ENCODE measurements at regions of chr1 and their contacts with region 1.

Region 1: GRCh38 chr1:160376525-160377131 is 9.8 kb downstream of the NHLH1 start:
- DNase-seq: peak; percentile 20 to 60
- H3K4me3 ChIP-seq: no peak overlapping the region
- H3K27ac ChIP-seq: no peak overlapping the region
- H3K4me1 ChIP-seq: peaks cover 10% of the 10 kb centered on the region
- H3K27me3 ChIP-seq: no peaks in the 10 kb centered on the region
- CTCF ChIP-seq: peak; percentile 87

Region 2: DNA sequence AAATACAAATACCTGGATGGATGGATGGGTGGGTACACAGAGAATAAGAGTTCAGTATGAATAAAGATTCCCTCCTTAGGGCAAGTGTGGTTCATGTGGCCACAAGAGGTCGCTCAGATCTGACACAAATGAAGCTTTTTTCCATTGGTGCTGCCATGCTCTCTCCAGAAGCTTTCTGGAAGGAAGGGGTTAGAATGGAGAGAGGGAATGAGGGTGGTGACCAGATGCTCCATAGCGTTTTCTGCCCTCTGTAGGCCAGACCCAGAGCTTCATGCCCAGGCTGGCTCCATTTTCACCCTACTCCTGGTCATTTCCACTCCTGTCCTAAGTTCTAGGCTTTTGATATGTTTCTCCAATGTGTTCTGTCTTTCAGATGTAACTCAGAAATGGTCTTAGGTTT is 577.7 kb before region 1 on chr1:
- CTCF ChIA-PET with region 1: no interaction called
- POLR2A ChIA-PET with region 1: no interaction called
- intact Hi-C with region 1: loop called (anchors 10 kb)
- DNase-seq: peak; percentile 61 to 70
- H3K4me3 ChIP-seq: no peak overlapping the region
- H3K27ac ChIP-seq: no peak overlapping the region
- H3K4me1 ChIP-seq: no peaks in the 10 kb centered on the region
- H3K27me3 ChIP-seq: peaks cover 19% of the 10 kb centered on the region
- CTCF ChIP-seq: peak; percentile 74

Region 3: DNA sequence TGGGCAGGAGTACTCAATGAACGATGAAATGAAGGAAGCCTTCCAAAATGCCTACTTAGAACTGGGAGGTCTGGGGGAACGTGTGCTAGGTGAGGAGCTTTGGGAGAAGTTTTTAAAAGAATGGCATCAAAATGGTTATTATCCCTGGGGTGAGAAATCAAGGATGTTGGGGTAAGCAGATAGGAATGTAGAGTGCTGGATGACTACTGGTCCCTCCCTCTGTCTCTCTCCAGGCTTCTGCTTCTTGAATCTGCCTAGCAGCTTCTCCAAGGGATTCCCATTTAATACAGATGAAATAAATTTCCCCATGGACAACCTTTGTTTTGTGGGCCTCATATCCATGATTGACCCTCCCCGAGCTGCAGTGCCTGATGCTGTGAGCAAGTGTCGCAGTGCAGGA is 205.3 kb before region 1 on chr1:
- CTCF ChIA-PET with region 1: no interaction called
- POLR2A ChIA-PET with region 1: no interaction called
- intact Hi-C with region 1: no loop called
- DNase-seq: no peak
- H3K4me3 ChIP-seq: no peak overlapping the region
- H3K27ac ChIP-seq: no peak overlapping the region
- H3K4me1 ChIP-seq: peaks cover 9% of the 10 kb centered on the region; the same call in 1 of the 2 replicates
- H3K27me3 ChIP-seq: peaks cover 14% of the 10 kb centered on the region
- CTCF ChIP-seq: no peak

Region 4: DNA sequence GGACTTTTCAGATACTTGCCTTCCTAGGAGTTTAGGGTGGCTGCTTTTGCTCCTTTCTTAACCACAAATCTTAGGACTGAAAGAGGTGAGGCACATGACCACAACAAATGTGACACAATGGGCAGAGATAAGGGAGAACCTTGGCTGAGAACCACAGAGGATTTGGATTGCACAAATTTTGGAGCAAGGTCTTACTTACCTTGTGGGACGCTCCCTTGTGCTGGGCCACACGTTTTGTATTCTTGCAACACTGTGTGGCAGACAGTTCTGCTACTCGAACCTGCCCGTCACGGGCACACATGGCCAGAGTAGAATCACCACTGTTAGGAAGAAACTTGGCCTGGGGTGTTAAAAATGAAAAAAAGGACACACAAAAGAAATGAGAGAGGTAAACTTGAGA is 138.2 kb before region 1 on chr1:
- CTCF ChIA-PET with region 1: no interaction called
- POLR2A ChIA-PET with region 1: no interaction called
- intact Hi-C with region 1: no loop called
- DNase-seq: no peak
- H3K4me3 ChIP-seq: no peak overlapping the region
- H3K27ac ChIP-seq: no peak overlapping the region
- H3K4me1 ChIP-seq: no peaks in the 10 kb centered on the region
- H3K27me3 ChIP-seq: no peaks in the 10 kb centered on the region
- CTCF ChIP-seq: no peak

Region 5: GRCh38 chr1:160251687-160252526 is 124.7 kb before region 1 on chr1:
- CTCF ChIA-PET with region 1: interaction called, 10 read pairs
- POLR2A ChIA-PET with region 1: no interaction called
- intact Hi-C with region 1: no loop called
- DNase-seq: peak; percentile 33 to 71
- H3K4me3 ChIP-seq: no peak overlapping the region
- H3K27ac ChIP-seq: no peak overlapping the region
- H3K4me1 ChIP-seq: peaks cover 9% of the 10 kb centered on the region
- H3K27me3 ChIP-seq: no peaks in the 10 kb centered on the region
- CTCF ChIP-seq: peak; percentile 81

Region 6: DNA sequence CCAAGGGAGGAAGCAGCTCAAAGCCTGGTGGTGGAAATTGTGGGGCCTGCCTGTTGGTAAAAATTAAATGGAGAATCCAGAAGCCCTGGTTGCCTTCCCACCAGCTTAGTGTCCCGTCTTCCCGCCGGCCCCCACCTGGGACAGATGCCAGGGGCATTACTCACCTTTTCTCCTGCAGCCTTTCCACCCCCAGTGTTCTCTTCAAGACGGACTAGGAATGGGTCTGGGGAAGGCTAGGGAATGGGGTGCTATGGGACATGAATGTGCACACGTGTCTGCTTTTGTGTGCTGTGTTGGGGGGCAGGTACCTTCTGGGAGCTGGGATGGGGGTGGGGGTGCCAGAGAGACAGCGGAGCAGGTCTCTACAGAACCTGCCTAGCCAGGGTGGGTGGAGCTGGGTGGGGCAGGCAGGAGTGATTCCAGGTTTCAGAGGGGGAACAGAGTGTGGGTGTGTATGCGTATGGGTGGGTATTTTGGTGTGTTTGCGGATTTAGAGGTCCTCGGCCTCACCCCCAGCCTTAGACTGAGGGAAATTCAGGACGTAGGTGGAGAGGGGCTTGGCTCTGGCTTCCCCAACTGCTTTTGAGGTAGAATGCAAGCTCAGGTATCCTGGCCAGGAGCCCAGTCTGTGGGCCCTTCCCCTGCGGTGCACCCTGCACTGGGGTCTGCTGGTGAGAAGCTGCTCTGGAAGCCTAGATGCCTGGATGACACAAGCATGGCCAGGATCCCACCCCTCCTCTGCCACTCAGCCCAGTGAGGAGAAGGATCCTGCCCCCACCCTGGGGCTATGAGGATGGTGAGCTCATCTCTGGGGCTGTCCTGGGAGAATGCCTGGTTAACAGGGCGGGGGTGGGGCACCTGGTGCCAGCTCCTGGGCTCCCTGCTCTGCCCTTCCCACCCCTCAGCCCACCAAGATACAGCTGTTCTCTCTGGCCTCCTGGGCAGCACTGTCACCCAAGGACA is 31.5 kb after region 1 on chr1:
- CTCF ChIA-PET with region 1: interaction called, 11 read pairs
- POLR2A ChIA-PET with region 1: interaction called, 4 read pairs
- intact Hi-C with region 1: no loop called
- DNase-seq: peak in 1 of 2 experiments; percentile 72
- H3K4me3 ChIP-seq: no peak overlapping the region
- H3K27ac ChIP-seq: no peak overlapping the region
- H3K4me1 ChIP-seq: peaks cover 12% of the 10 kb centered on the region
- H3K27me3 ChIP-seq: peaks cover 10% of the 10 kb centered on the region; the same call in 1 of the 2 replicates
- CTCF ChIP-seq: no peak

Region 7: GRCh38 chr1:160416369-160416768 is 39.7 kb after region 1 on chr1:
- CTCF ChIA-PET with region 1: interaction called, 5 read pairs
- POLR2A ChIA-PET with region 1: no interaction called
- intact Hi-C with region 1: loop called (anchors 1 kb)
- DNase-seq: peak in 1 of 2 experiments; percentile 57
- H3K4me3 ChIP-seq: no peak overlapping the region
- H3K27ac ChIP-seq: no peak overlapping the region
- H3K4me1 ChIP-seq: no peaks in the 10 kb centered on the region
- H3K27me3 ChIP-seq: 0 out of 2 replicates have a peak, but pooled peaks cover 5% of the 10 kb centered on the region
- CTCF ChIP-seq: peak; percentile 65

Measured in PC-9 (cell line).